ENCODE measurements at regions of chr10 and their contacts with region 1.

Region 1: GRCh38 chr10:96229568-96230030 is 41.8 kb downstream of the BLNK start:
- DNase-seq: peak; percentile 88
- ATAC-seq: peak; percentile 71
- H3K4me3 Mint-ChIP-seq: no peak overlapping the region
- H3K27ac Mint-ChIP-seq: no peak overlapping the region
- H3K4me1 Mint-ChIP-seq: peaks cover 12% of the 10 kb centered on the region
- H3K27me3 Mint-ChIP-seq: no peaks in the 10 kb centered on the region; the same call in 1 of the 2 replicates
- CTCF ChIP-seq: peak; percentile 77; the same call in 1 of the 2 replicates

Region 2: GRCh38 chr10:96201527-96201926 is 28.1 kb before region 1 on chr10:
- CTCF ChIA-PET with region 1: interaction called, 10 read pairs
- POLR2A ChIA-PET with region 1: no interaction called
- DNase-seq: no peak
- ATAC-seq: no peak
- H3K4me3 Mint-ChIP-seq: no peak overlapping the region
- H3K27ac Mint-ChIP-seq: no peak overlapping the region
- H3K4me1 Mint-ChIP-seq: peaks cover 35% of the 10 kb centered on the region
- H3K27me3 Mint-ChIP-seq: no peaks in the 10 kb centered on the region
- CTCF ChIP-seq: no peak

Region 3: GRCh38 chr10:96287392-96288105 is 58.0 kb after region 1 on chr10:
- CTCF ChIA-PET with region 1: interaction called, 110 read pairs
- POLR2A ChIA-PET with region 1: no interaction called
- DNase-seq: no peak
- ATAC-seq: no peak
- H3K4me3 Mint-ChIP-seq: no peak overlapping the region
- H3K27ac Mint-ChIP-seq: 0 out of 2 replicates have a peak overlapping the region, but pooled peaks have one; percentile 26
- H3K4me1 Mint-ChIP-seq: peaks cover 22% of the 10 kb centered on the region
- H3K27me3 Mint-ChIP-seq: no peaks in the 10 kb centered on the region
- CTCF ChIP-seq: no peak

Region 4: DNA sequence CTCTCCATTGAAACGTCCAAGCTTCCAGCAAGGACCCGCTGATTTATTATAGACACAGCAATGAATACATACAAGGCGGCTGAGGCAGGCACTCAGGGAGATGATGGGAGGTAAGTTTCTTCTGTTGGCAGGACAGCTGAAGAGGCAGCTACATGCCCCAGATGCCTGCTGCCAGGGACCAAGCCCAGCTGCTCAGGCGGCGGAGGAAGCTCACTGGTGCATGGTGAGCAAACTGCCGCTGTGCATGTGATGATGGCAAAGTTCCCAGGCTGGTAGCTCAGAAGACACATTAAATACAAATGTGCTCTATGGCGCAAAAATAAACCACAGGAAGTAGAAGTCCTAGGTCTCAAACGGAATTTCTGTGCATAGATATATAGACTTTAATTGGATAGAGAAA is 76.9 kb after region 1 on chr10:
- CTCF ChIA-PET with region 1: interaction called, 62 read pairs
- POLR2A ChIA-PET with region 1: no interaction called
- DNase-seq: no peak
- ATAC-seq: no peak
- H3K4me3 Mint-ChIP-seq: no peak overlapping the region
- H3K27ac Mint-ChIP-seq: no peak overlapping the region
- H3K4me1 Mint-ChIP-seq: peaks cover 52% of the 10 kb centered on the region
- H3K27me3 Mint-ChIP-seq: peaks cover 5% of the 10 kb centered on the region; the same call in 1 of the 2 replicates
- CTCF ChIP-seq: no peak

Region 5: DNA sequence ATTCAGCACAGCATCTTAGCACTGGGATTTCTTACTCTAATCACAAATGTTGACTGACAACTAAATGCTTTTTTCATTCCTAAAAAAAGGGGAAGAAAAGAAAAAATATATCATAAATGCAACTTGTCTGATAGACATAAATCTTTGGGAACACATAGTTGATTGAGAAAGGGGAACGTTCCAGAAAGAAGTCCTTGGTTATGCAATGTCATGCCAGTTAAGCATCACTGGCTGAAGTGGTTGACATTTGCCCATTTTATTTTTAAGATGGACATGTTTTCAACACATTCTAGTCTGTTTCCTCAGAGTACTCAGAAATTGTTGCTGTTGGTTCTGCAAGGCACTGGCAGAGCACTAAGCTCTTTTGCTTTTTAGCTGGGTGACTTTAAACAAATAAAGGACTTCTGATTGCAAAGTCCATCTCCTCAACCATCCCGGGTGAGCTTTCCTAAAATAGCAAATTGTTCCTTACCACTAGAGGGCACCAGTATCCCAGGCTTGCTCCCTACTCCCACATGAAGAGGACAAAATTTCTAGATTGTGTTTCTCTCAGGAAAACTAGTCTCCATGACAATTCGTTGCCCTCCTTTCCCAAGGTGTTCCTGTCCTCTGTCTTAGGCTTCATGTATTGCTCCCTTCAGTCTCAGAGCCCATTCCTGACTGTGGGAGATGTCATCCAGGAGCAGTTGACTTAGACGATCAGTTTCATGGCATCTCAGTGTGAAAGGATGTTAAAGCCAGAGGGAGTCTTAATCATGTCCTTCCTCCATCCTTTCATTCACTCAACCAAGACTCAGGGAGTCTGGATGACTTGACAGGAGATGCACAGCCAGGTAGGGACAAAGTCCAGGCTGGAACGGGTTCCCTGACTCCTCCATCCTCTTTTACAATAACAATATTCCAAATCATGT is 105.3 kb after region 1 on chr10:
- CTCF ChIA-PET with region 1: interaction called, 35 read pairs
- POLR2A ChIA-PET with region 1: no interaction called
- DNase-seq: no peak
- ATAC-seq: peak; percentile 79
- H3K4me3 Mint-ChIP-seq: no peak overlapping the region
- H3K27ac Mint-ChIP-seq: no peak overlapping the region
- H3K4me1 Mint-ChIP-seq: peaks cover 26% of the 10 kb centered on the region
- H3K27me3 Mint-ChIP-seq: peaks cover 4% of the 10 kb centered on the region
- CTCF ChIP-seq: peak; percentile 75

Measured in WTC11 (cell line).